Common myeloid progenitor, CD34-positive (primary cell): ENCODE measurements at regions of chr10 and their contacts with region 1.

Region 1: GRCh38 chr10:75395066-75395931 is 6.3 kb downstream of the ZNF503 start:
- DNase-seq: peak in 2 of 3 donors; percentile 36 to 44
- H3K4me3 ChIP-seq: peak overlapping the region in 5 of 7 experiments; percentile 13 to 77 (median 48)
- H3K27ac ChIP-seq: no peak overlapping the region
- H3K4me1 ChIP-seq: peaks cover 0 to 29% (median 25%) of the 10 kb centered on the region in 4 experiments
- H3K27me3 ChIP-seq: peaks cover 0 to 43% (median 27%) of the 10 kb centered on the region in 5 experiments

Region 2: GRCh38 chr10:75294866-75295701 is 100.2 kb before region 1 on chr10:
- CTCF ChIA-PET with region 1: interaction called, 16 read pairs
- POLR2A ChIA-PET with region 1: no interaction called
- DNase-seq: peak; percentile 79 to 92 (median 85)
- H3K4me3 ChIP-seq: peak overlapping the region; percentile 47 to 82 (median 74)
- H3K27ac ChIP-seq: peak overlapping the region; percentile 19 to 60
- H3K4me1 ChIP-seq: peaks cover 17 to 31% (median 21%) of the 10 kb centered on the region in 4 experiments
- H3K27me3 ChIP-seq: peaks cover 0 to 2% (median 0%) of the 10 kb centered on the region in 5 experiments

Region 3: DNA sequence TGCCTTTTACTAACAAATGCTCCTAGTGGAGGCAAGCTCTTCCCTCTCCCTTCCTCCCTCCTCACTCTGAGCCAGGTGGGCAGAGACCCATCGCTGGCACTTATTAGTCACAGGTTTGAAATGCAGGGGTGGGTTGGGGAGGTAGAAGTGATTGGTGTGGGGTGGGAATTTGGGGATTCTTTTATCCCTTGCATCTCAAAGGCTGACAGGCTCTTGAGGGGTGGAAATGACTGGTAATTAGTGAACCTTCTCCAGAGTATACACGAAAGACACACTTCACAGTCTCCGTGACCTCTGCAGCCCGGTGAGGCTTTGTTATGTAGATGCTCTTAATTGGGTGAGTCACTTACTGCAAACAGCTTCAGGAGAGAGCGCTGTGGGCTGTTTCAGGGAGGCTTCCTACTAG is 22.2 kb after region 1 on chr10:
- CTCF ChIA-PET with region 1: no interaction called
- POLR2A ChIA-PET with region 1: no interaction called
- DNase-seq: no peak
- H3K4me3 ChIP-seq: no peak overlapping the region
- H3K27ac ChIP-seq: no peak overlapping the region
- H3K4me1 ChIP-seq: no peaks in the 10 kb centered on the region
- H3K27me3 ChIP-seq: peaks cover 0 to 3% (median 0%) of the 10 kb centered on the region in 5 experiments

Region 4: DNA sequence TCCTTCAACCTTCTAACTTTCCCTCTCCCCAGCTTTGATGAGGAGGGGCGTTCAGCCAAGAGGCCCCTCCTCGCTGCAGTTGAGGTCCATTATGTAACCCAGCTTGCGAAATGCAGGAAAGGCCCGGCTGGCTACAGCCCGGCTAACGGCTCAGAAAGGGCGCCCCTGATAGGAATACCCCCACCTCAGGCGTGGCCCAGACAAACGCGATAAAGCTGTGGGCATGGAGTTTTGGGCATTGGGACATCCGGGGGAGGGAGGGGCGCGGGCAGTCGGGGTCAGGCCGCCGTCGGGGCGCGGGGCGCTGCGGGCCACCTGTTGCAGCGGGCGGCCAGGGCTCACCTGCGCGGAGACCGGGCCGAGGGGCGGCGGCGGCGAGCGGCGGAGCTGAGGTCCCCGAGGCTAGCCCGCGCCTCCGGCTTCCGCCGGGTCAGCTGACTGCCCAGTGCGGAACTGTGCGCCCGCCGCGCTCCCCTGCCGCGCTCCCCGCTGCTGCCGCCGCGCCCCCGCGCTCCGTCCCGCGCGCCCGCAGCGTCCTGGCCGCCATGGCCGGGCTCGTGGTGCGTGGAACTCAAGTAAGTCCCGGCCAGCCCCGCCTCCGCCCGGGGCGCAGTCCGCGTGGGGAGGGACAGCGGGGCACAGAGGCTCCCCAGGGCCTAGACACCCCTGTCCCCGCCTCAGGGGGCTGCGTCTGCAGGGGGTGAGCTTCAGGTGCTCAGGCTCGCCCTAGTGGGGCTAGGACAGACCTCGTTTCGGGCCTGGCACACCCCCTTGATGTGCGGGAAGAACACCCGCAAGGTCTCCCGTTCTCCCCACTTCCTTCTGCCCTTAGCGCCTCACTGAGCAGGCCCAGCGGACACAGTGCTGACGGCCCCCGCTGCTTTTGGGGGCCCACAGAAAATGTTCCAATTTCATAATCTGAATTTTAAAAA is 36.1 kb after region 1 on chr10 and contains the start of gene LRMDA:
- CTCF ChIA-PET with region 1: no interaction called
- POLR2A ChIA-PET with region 1: no interaction called
- DNase-seq: peak; percentile 67 to 91 (median 91)
- H3K4me3 ChIP-seq: peak within 1 kb of the TSS; percentile 62 to 89 (median 78)
- H3K27ac ChIP-seq: peak within 1 kb of the TSS; percentile 37 to 80
- H3K4me1 ChIP-seq: peaks cover 9 to 56% (median 42%) of the 10 kb centered on the region in 4 experiments
- H3K27me3 ChIP-seq: no peaks in the 10 kb centered on the region

Region 5: GRCh38 chr10:75565286-75566251 is 170.3 kb after region 1 on chr10:
- CTCF ChIA-PET with region 1: no interaction called
- POLR2A ChIA-PET with region 1: no interaction called
- DNase-seq: no peak
- H3K4me3 ChIP-seq: no peak overlapping the region
- H3K27ac ChIP-seq: no peak overlapping the region
- H3K4me1 ChIP-seq: no peaks in the 10 kb centered on the region
- H3K27me3 ChIP-seq: no peaks in the 10 kb centered on the region

Region 6: GRCh38 chr10:76036111-76036940 is 641.0 kb after region 1 on chr10:
- CTCF ChIA-PET with region 1: interaction called, 10 read pairs
- POLR2A ChIA-PET with region 1: no interaction called
- DNase-seq: peak; percentile 60 to 75 (median 63)
- H3K4me3 ChIP-seq: no peak overlapping the region
- H3K27ac ChIP-seq: no peak overlapping the region
- H3K4me1 ChIP-seq: peaks cover 0 to 13% (median 8%) of the 10 kb centered on the region in 4 experiments
- H3K27me3 ChIP-seq: no peaks in the 10 kb centered on the region